ENCODE measurements at regions of chr2 and their contacts with region 1.

Region 1: DNA sequence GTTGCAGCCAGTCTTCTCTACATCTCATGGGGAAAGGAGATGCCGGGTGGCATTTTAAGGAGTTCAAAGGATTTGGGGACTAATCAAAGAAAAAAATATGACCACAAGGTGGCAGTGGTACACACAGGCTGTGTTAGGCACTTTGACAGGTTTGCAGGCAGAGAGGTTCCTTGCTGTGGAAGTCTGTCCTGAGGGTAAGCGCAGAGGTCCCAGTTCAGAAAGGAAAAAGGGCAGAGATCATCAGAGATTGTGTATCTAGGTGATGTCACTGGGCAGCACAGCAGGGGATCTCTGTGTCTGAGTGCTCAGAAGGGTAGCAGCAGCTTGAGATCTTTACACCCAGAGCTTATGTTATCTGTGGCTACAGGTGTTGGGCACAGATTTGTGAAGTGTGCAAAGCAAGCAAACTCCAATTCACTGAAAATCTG is 231.4 kb downstream of the LRRTM1 start:
- DNase-seq: peak; percentile 73 to 76
- H3K4me3 ChIP-seq: no peak overlapping the region
- H3K4me3 Mint-ChIP-seq: no peak overlapping the region
- H3K27ac Mint-ChIP-seq: no peak overlapping the region
- H3K4me1 ChIP-seq: no peaks in the 10 kb centered on the region
- H3K4me1 Mint-ChIP-seq: peaks cover under 1% of the 10 kb centered on the region
- H3K27me3 ChIP-seq: no peaks in the 10 kb centered on the region
- H3K27me3 Mint-ChIP-seq: peaks cover 14% of the 10 kb centered on the region
- CTCF ChIP-seq: peak; percentile 74 to 78

Region 2: DNA sequence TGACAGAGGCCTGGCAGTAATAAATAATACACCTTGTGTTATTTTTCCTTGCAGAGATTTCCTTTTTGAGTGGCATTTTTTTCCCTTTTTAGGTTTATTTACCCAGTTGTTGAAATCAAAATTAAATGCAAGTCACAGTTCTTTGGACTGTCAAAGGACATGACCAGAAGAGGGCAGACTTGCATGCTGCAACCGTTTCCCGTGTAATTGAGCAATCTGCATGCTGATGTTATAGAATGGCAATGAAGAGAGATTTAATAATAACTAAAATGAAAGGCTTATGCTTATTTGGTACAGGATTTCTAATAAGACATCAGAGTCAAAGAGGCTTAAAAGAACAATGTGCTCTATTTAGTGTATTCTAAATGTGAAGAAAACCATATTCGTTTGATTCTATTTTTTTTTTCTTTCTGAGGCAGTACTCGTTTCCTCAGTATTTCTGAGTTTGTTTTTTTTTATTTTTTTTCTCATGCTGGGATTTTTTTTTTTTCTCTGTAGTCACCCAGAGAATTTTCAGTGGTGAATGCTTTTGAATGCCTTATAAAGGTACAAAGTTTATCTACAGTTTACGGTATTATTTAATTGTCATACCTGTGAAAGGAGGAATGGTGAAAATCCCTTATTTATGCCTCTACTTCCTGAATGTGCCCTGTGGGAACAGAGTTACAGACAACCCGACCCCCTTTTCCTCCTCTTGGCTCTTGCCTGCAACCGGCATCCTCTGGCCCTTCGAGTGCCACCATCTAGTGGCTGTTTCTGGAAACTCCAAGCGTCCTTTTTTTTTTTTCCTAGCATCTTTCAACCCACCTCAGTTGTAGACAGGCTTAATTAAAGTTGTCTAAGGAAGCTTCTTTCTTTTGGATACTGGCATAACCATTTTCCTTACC is 137.1 kb before region 1 on chr2:
- CTCF ChIA-PET with region 1: no interaction called
- POLR2A ChIA-PET with region 1: no interaction called
- intact Hi-C with region 1: loop called (anchors 1 kb)
- DNase-seq: peak; percentile 50 to 70
- H3K4me3 ChIP-seq: no peak overlapping the region
- H3K4me3 Mint-ChIP-seq: peak overlapping the region; percentile 8
- H3K27ac Mint-ChIP-seq: no peak overlapping the region
- H3K4me1 ChIP-seq: no peaks in the 10 kb centered on the region
- H3K4me1 Mint-ChIP-seq: no peaks in the 10 kb centered on the region
- H3K27me3 ChIP-seq: no peaks in the 10 kb centered on the region
- H3K27me3 Mint-ChIP-seq: peaks cover 11% of the 10 kb centered on the region
- CTCF ChIP-seq: peak; percentile 56 to 84

Region 3: GRCh38 chr2:80042635-80043034 is 30.5 kb before region 1 on chr2:
- CTCF ChIA-PET with region 1: no interaction called
- POLR2A ChIA-PET with region 1: no interaction called
- intact Hi-C with region 1: no loop called
- DNase-seq: no peak
- H3K4me3 ChIP-seq: no peak overlapping the region
- H3K4me3 Mint-ChIP-seq: no peak overlapping the region
- H3K27ac Mint-ChIP-seq: no peak overlapping the region
- H3K4me1 ChIP-seq: no peaks in the 10 kb centered on the region
- H3K4me1 Mint-ChIP-seq: no peaks in the 10 kb centered on the region
- H3K27me3 ChIP-seq: no peaks in the 10 kb centered on the region
- H3K27me3 Mint-ChIP-seq: peaks cover 9% of the 10 kb centered on the region
- CTCF ChIP-seq: no peak

Region 4: DNA sequence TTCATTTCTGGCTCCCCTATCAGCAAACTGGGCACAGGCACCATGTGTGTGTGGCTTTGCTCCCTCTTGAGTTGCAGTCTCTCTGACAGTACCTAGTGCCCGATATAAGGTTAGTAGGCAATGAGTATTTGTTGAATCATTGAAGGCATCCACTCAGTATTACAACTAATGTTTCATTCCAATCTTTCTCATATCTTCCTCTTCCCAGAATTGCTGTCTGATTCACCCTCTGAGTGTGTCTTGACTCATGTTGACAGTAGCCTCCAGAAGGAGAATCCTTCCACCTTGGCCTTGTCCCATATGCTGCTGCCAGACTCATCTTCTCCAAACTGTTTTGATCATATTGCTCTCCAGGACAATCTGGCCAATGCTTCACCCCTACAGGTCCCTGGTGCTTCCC is 28.9 kb after region 1 on chr2:
- CTCF ChIA-PET with region 1: no interaction called
- POLR2A ChIA-PET with region 1: no interaction called
- intact Hi-C with region 1: no loop called
- DNase-seq: no peak
- H3K4me3 ChIP-seq: no peak overlapping the region
- H3K4me3 Mint-ChIP-seq: no peak overlapping the region
- H3K27ac Mint-ChIP-seq: no peak overlapping the region
- H3K4me1 ChIP-seq: no peaks in the 10 kb centered on the region
- H3K4me1 Mint-ChIP-seq: no peaks in the 10 kb centered on the region
- H3K27me3 ChIP-seq: no peaks in the 10 kb centered on the region
- H3K27me3 Mint-ChIP-seq: peaks cover 3% of the 10 kb centered on the region
- CTCF ChIP-seq: no peak

Region 5: GRCh38 chr2:80149991-80150390 is 76.8 kb after region 1 on chr2:
- CTCF ChIA-PET with region 1: no interaction called
- POLR2A ChIA-PET with region 1: no interaction called
- intact Hi-C with region 1: loop called (anchors 5 kb)
- DNase-seq: no peak
- H3K4me3 ChIP-seq: no peak overlapping the region
- H3K4me3 Mint-ChIP-seq: no peak overlapping the region
- H3K27ac Mint-ChIP-seq: no peak overlapping the region
- H3K4me1 ChIP-seq: peaks cover 5% of the 10 kb centered on the region; the same call in 1 of the 2 replicates
- H3K4me1 Mint-ChIP-seq: peaks cover 2% of the 10 kb centered on the region
- H3K27me3 ChIP-seq: no peaks in the 10 kb centered on the region
- H3K27me3 Mint-ChIP-seq: no peaks in the 10 kb centered on the region
- CTCF ChIP-seq: no peak

Region 6: DNA sequence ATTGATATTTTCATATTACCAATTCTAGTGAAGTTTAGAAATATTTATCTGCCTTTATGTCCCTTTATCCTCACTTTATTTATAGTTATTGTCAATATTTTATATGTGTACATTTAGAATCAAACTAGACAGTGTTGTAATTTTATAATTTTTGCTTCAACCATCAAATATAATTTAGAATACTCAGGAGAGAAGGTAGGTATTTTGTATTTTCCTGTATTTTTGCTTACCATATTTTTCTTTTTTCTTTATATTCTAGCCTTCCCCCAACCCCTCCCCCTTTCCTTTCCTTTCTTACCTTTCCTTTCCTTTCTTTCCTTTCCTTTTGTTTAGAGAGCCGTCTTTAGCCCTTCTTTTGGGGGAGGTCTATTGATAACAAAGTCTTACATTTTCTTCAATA is 91.2 kb after region 1 on chr2:
- CTCF ChIA-PET with region 1: no interaction called
- POLR2A ChIA-PET with region 1: no interaction called
- intact Hi-C with region 1: no loop called
- DNase-seq: no peak
- H3K4me3 ChIP-seq: no peak overlapping the region
- H3K4me3 Mint-ChIP-seq: no peak overlapping the region
- H3K27ac Mint-ChIP-seq: no peak overlapping the region
- H3K4me1 ChIP-seq: peaks cover 10% of the 10 kb centered on the region; the same call in 1 of the 2 replicates
- H3K4me1 Mint-ChIP-seq: no peaks in the 10 kb centered on the region
- H3K27me3 ChIP-seq: no peaks in the 10 kb centered on the region
- H3K27me3 Mint-ChIP-seq: no peaks in the 10 kb centered on the region
- CTCF ChIP-seq: no peak

Region 7: GRCh38 chr2:80238692-80239469 is 165.7 kb after region 1 on chr2:
- CTCF ChIA-PET with region 1: interaction called, 10 read pairs
- POLR2A ChIA-PET with region 1: no interaction called
- intact Hi-C with region 1: loop called (anchors 1 kb)
- DNase-seq: peak; percentile 39 to 63
- H3K4me3 ChIP-seq: no peak overlapping the region
- H3K4me3 Mint-ChIP-seq: no peak overlapping the region
- H3K27ac Mint-ChIP-seq: no peak overlapping the region
- H3K4me1 ChIP-seq: no peaks in the 10 kb centered on the region
- H3K4me1 Mint-ChIP-seq: no peaks in the 10 kb centered on the region
- H3K27me3 ChIP-seq: no peaks in the 10 kb centered on the region
- H3K27me3 Mint-ChIP-seq: no peaks in the 10 kb centered on the region
- CTCF ChIP-seq: peak; percentile 65 to 83

Region 8: GRCh38 chr2:80303909-80304837 is 231.0 kb after region 1 on chr2 and contains the start of gene LRRTM1:
- CTCF ChIA-PET with region 1: no interaction called
- POLR2A ChIA-PET with region 1: no interaction called
- intact Hi-C with region 1: loop called (anchors 10 kb)
- DNase-seq: peak; percentile 20 to 45
- H3K4me3 ChIP-seq: peak within 1 kb of the TSS; percentile 35
- H3K4me3 Mint-ChIP-seq: peak within 1 kb of the TSS; percentile 67
- H3K27ac Mint-ChIP-seq: no peak within 1 kb of the TSS
- H3K4me1 ChIP-seq: no peaks in the 10 kb centered on the region
- H3K4me1 Mint-ChIP-seq: no peaks in the 10 kb centered on the region
- H3K27me3 ChIP-seq: peaks cover 2% of the 10 kb centered on the region
- H3K27me3 Mint-ChIP-seq: peaks cover 31% of the 10 kb centered on the region
- CTCF ChIP-seq: no peak
- total RNA-seq, gene LRRTM1: not detected in 2 replicates

Region 9: DNA sequence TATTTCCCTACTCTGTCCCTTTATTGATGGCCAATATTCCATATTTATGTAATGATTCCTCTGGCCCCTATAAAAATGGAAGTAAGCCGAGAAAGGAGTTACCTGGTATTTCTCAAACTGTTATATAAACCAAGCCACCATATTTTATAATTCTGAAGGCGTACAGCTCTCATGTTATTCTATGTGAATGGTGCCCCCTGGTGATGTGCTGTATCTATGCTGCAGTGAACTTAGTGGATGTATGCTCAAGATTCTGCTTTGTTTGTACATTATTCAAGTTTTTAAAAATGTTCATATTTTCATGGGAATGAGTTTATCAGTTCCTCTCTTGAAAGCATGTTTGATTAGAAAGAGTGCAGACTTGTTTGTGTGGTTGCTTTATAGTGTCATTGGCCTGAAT is 425.9 kb after region 1 on chr2:
- CTCF ChIA-PET with region 1: interaction called, 6 read pairs
- POLR2A ChIA-PET with region 1: no interaction called
- intact Hi-C with region 1: loop called (anchors 1 kb)
- DNase-seq: peak; percentile 37 to 47
- H3K4me3 ChIP-seq: no peak overlapping the region
- H3K4me3 Mint-ChIP-seq: no peak overlapping the region
- H3K27ac Mint-ChIP-seq: no peak overlapping the region
- H3K4me1 ChIP-seq: no peaks in the 10 kb centered on the region
- H3K4me1 Mint-ChIP-seq: no peaks in the 10 kb centered on the region
- H3K27me3 ChIP-seq: no peaks in the 10 kb centered on the region
- H3K27me3 Mint-ChIP-seq: peaks cover 17% of the 10 kb centered on the region
- CTCF ChIP-seq: peak; percentile 47 to 68

Region 10: DNA sequence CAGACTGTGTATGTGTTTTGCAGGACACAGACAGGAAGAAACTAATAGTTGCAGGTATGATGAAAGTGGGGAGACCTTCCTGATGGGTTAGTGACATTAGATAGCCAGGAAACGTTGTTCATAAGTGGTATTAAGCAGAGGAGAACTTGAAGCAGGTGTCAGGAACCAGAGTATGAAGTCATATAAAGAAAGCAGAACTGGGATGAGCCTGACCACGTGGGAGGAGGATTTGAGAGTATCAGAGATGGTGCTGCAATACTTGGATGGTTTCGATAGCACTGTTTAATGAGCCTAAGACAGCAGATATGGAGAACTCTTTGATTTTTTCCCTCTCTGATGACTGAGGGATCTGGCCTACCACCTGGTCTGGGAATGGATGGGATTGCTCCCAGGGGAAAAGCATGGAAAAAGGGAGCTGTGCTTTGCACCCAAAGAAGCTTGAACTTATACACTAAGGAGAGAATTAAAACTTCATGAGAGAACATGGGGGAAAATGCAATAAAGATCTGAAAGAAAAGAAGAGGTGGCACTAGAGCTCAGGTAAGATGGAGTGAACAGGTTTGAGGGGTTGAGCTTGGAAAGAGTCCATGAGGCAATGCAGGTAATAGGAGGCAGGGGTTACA is 457.4 kb after region 1 on chr2:
- CTCF ChIA-PET with region 1: no interaction called
- POLR2A ChIA-PET with region 1: no interaction called
- intact Hi-C with region 1: no loop called
- DNase-seq: no peak
- H3K4me3 ChIP-seq: no peak overlapping the region
- H3K4me3 Mint-ChIP-seq: no peak overlapping the region
- H3K27ac Mint-ChIP-seq: no peak overlapping the region
- H3K4me1 ChIP-seq: no peaks in the 10 kb centered on the region
- H3K4me1 Mint-ChIP-seq: no peaks in the 10 kb centered on the region
- H3K27me3 ChIP-seq: no peaks in the 10 kb centered on the region
- H3K27me3 Mint-ChIP-seq: peaks cover 6% of the 10 kb centered on the region
- CTCF ChIP-seq: no peak

Measured in Caco-2 (cell line).